Mucosa of descending colon (tissue), 3 donors: ENCODE measurements at regions of chr1 and their contacts with region 1.

Region 1: DNA sequence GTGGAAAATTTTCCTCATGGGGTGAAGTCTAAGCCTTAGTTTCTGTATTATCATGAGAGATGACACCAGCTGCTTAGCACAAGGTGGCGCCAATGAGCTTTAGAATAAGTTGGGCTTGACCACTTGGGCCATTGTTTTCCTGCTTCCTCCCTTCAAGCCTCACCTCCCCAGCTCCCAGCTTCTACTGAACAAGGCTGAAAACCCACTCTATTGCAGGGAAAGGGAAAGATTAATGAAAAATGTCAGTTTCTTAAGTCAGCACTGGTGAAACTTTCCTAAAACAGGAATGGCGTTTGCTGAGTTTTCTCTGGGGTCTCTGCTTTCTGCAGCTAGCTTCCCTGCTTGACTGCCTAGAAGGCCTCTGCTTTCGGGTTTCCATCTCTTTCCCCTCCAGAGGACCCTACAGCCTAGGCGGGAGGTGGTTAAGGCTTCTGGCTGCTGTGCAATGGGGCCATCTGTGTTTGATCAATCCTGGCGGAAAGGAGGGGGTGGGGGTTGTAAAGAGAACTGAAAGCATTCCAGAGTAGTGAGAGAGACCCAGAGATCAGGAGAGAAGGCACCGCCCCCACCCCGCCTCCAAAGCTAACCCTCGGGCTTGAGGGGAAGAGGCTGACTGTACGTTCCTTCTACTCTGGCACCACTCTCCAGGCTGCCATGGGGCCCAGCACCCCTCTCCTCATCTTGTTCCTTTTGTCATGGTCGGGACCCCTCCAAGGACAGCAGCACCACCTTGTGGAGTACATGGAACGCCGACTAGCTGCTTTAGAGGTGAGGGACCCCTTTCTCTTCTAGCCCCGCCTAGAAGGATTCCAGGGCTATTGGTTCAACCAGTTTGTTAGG is at the start of gene OLFML3:
- DNase-seq: peak; percentile 71 to 93 (median 76)
- ATAC-seq: peak; percentile 81
- H3K4me3 ChIP-seq: no peak within 1 kb of the TSS
- H3K4me1 ChIP-seq: peaks cover 6% of the 10 kb centered on the region
- CTCF ChIP-seq: peak; percentile 32
- total RNA-seq, gene OLFML3: 5.4 to 51.1 (median 28.2) TPM

Region 2: GRCh38 chr1:114282751-114283403 is 303.8 kb after region 1 on chr1:
- intact Hi-C with region 1: loop called (anchors 2 to 5 kb)
- DNase-seq: peak; percentile 77 to 94 (median 86)
- ATAC-seq: peak; percentile 97
- H3K4me3 ChIP-seq: no peak overlapping the region
- H3K4me1 ChIP-seq: no peaks in the 10 kb centered on the region
- CTCF ChIP-seq: peak; percentile 66

Region 3: DNA sequence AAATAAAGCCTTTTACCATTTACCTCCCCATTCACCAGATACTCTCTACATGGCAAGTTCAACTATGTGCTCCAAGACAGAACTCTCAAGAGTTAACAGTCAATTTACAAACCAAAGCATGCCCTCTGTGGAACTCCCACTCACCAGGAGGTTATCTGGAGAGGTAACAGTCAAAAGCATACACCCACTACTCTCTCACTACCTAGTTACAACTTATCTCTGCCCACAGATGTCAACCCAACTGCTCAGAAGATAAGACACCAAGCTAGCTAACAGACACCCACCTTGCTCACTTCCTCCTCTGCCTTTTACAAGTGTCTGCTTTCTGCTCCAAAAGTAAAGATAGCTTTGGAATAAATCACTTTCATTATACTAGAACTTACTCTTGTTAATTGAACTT is 400.9 kb after region 1 on chr1:
- intact Hi-C with region 1: no loop called
- DNase-seq: no peak
- ATAC-seq: no peak
- H3K4me3 ChIP-seq: no peak overlapping the region
- H3K4me1 ChIP-seq: no peaks in the 10 kb centered on the region
- CTCF ChIP-seq: no peak